Motor neuron (in vitro differentiated cells): ENCODE measurements at regions of chr21 and their contacts with region 1.

Region 1: GRCh38 chr21:36927719-36928117 is 38.8 kb downstream of the HLCS start:
- ATAC-seq: peak; percentile 65 to 99 (median 88)
- H3K4me3 ChIP-seq: no peak overlapping the region
- H3K27ac ChIP-seq: no peak overlapping the region
- H3K4me1 ChIP-seq: no peaks in the 10 kb centered on the region

Region 2: GRCh38 chr21:36504067-36505058 is 423.4 kb before region 1 on chr21:
- in situ Hi-C with region 1: loop called in 4 of 9 experiments (anchors 25 kb)
- ATAC-seq: no peak
- H3K4me3 ChIP-seq: no peak overlapping the region
- H3K27ac ChIP-seq: no peak overlapping the region
- H3K4me1 ChIP-seq: no peaks in the 10 kb centered on the region

Region 3: DNA sequence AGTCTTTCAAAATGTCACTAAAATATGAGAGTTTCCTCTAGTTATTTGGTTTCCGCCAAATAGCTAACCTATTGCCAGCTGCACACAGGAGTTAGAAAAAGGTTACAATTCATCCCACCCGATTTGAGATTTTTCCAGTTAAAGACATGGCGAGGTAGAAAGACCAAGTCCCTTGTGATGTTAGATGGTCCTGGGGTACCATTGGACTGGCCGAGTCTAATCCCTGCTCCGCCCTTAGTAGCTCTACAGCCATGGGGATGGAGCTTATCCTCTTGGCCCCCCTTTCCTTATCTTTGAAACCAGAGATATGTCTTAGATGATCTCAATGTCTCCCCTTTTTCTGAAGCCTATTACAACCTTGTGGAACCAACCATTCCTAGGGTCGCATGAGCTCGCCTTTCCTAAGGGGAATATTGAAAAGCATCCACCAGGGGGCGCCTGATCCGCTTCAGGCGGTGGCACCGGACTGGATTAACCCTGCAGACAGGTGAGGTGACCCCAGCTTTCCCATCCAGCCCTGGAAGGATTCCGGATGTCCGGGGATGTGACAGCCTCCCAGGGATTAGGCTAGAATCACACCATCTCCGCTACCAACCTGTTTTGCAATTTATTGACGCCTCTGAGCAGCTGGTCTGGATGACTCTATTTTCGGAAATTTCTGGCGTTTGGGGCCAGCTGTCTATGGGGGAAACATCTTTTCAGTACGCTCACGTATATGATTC is 297.1 kb before region 1 on chr21:
- in situ Hi-C with region 1: loop called in 1 of 9 experiments (anchors 10 kb)
- ATAC-seq: peak in 3 of 8 experiments; percentile 60 to 82 (median 75)
- H3K4me3 ChIP-seq: no peak overlapping the region
- H3K27ac ChIP-seq: no peak overlapping the region
- H3K4me1 ChIP-seq: no peaks in the 10 kb centered on the region